ENCODE measurements at regions of chr1 and their contacts with region 1.

Region 1: GRCh38 chr1:23559136-23559984 is at the start of gene ID3:
- DNase-seq: peak; percentile 78 to 96
- H3K4me3 ChIP-seq: peak within 1 kb of the TSS; percentile 66 to 98 (median 94)
- H3K27ac ChIP-seq: peak within 1 kb of the TSS; percentile 64
- H3K4me1 ChIP-seq: peaks cover 22 to 36% (median 27%) of the 10 kb centered on the region in 4 experiments
- H3K27me3 ChIP-seq: peaks cover 0 to 4% (median 0%) of the 10 kb centered on the region in 4 experiments; a peak in 2 of 7 replicates
- CTCF ChIP-seq: no peak
- EP300 ChIP-seq: no peak; a peak in 1 of 3 replicates
- POLR2A ChIP-seq: peak; percentile 96 to 97
- RAD21 ChIP-seq: no peak; a peak in 1 of 4 replicates
- total RNA-seq, gene ID3: 240 and 252 TPM in 2 replicates

Region 2: GRCh38 chr1:23539698-23540266 is 19.6 kb before region 1 on chr1:
- CTCF ChIA-PET with region 1: interaction called, 20 read pairs
- POLR2A ChIA-PET with region 1: interaction called, 51 read pairs
- DNase-seq: peak; percentile 95 to 98
- H3K4me3 ChIP-seq: no peak overlapping the region
- H3K27ac ChIP-seq: no peak overlapping the region
- H3K4me1 ChIP-seq: peaks cover 0 to under 1% (median 0%) of the 10 kb centered on the region in 4 experiments; a peak in 2 of 7 replicates
- H3K27me3 ChIP-seq: no peaks in the 10 kb centered on the region
- CTCF ChIP-seq: peak; percentile 82 to 97 (median 94)
- EP300 ChIP-seq: peak in 1 of 2 experiments; percentile 53; a peak in 1 of 3 replicates
- POLR2A ChIP-seq: no peak
- RAD21 ChIP-seq: peak; percentile 97 to 98

Region 3: DNA sequence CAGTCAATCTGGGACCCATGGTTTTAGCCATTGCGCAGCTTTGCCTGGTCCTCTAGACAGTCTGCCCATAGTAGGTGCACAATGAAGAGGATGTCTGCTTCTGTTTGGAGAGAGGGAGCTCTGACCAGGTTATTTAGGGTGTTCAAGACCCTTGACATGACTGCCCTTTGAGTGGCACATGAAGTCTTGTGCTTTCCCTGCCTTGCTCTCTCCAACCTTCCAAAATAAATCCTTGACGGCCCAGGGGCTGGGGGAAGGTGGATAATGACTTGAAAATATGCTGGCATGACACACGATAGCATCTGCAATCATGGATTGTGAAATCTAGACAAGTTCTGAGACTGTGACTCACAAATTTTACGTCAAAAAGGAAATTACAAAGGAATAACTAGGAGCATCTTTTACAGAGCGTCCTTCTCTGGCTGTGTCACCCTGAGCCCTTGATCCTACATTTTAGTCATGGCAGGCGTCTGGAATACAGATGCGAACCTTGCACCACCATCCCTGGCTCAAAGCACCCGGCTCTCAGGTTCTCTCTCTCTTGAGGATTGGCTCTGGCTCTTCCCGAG is 26.2 kb after region 1 on chr1:
- CTCF ChIA-PET with region 1: interaction called, 3 read pairs
- POLR2A ChIA-PET with region 1: interaction called, 547 read pairs
- DNase-seq: no peak
- H3K4me3 ChIP-seq: no peak overlapping the region
- H3K27ac ChIP-seq: no peak overlapping the region
- H3K4me1 ChIP-seq: 0 out of 7 replicates have a peak, but pooled peaks cover 0 to 4% (median 1%) of the 10 kb centered on the region in 4 experiments
- H3K27me3 ChIP-seq: no peaks in the 10 kb centered on the region
- CTCF ChIP-seq: no peak
- EP300 ChIP-seq: no peak
- POLR2A ChIP-seq: no peak
- RAD21 ChIP-seq: no peak

Region 4: GRCh38 chr1:23619299-23620188 is 60.2 kb after region 1 on chr1:
- CTCF ChIA-PET with region 1: interaction called, 5 read pairs
- POLR2A ChIA-PET with region 1: interaction called, 547 read pairs
- DNase-seq: peak in 1 of 2 experiments; percentile 72
- H3K4me3 ChIP-seq: peak overlapping the region; percentile 6 to 55 (median 28)
- H3K27ac ChIP-seq: no peak overlapping the region
- H3K4me1 ChIP-seq: peaks cover 4 to 17% (median 9%) of the 10 kb centered on the region in 4 experiments; a peak in 6 of 7 replicates
- H3K27me3 ChIP-seq: peaks cover 0 to 19% (median 13%) of the 10 kb centered on the region in 4 experiments; a peak in 5 of 7 replicates
- CTCF ChIP-seq: no peak
- EP300 ChIP-seq: no peak
- POLR2A ChIP-seq: no peak
- RAD21 ChIP-seq: no peak

Region 5: GRCh38 chr1:23643736-23644554 is 84.6 kb after region 1 on chr1:
- CTCF ChIA-PET with region 1: interaction called, 706 read pairs
- POLR2A ChIA-PET with region 1: interaction called, 155 read pairs
- DNase-seq: no peak
- H3K4me3 ChIP-seq: no peak overlapping the region
- H3K27ac ChIP-seq: no peak overlapping the region
- H3K4me1 ChIP-seq: peaks cover 0 to 4% (median 2%) of the 10 kb centered on the region in 4 experiments; a peak in 3 of 7 replicates
- H3K27me3 ChIP-seq: peaks cover 0 to 2% (median 0%) of the 10 kb centered on the region in 4 experiments; a peak in 2 of 7 replicates
- CTCF ChIP-seq: no peak
- EP300 ChIP-seq: no peak
- POLR2A ChIP-seq: no peak
- RAD21 ChIP-seq: no peak

Region 6: GRCh38 chr1:23743287-23744052 is 184.1 kb after region 1 on chr1 and contains the start of gene ELOA:
- CTCF ChIA-PET with region 1: no interaction called
- POLR2A ChIA-PET with region 1: interaction called, 11 read pairs
- DNase-seq: peak; percentile 23 to 85
- H3K4me3 ChIP-seq: peak within 1 kb of the TSS; percentile 79 to 88 (median 84)
- H3K27ac ChIP-seq: peak within 1 kb of the TSS; percentile 61; the same call in 1 of the 2 replicates
- H3K4me1 ChIP-seq: peaks cover 3 to 10% (median 3%) of the 10 kb centered on the region in 4 experiments; a peak in 4 of 7 replicates
- H3K27me3 ChIP-seq: no peaks in the 10 kb centered on the region
- CTCF ChIP-seq: no peak
- EP300 ChIP-seq: no peak
- POLR2A ChIP-seq: peak; percentile 72 to 74; a peak in 2 of 3 replicates
- RAD21 ChIP-seq: no peak
- total RNA-seq, gene ELOA: 56.9 and 61.1 TPM in 2 replicates

Measured in H1 (cell line).